ENCODE measurements at regions of chr5 and their contacts with region 1.

Region 1: DNA sequence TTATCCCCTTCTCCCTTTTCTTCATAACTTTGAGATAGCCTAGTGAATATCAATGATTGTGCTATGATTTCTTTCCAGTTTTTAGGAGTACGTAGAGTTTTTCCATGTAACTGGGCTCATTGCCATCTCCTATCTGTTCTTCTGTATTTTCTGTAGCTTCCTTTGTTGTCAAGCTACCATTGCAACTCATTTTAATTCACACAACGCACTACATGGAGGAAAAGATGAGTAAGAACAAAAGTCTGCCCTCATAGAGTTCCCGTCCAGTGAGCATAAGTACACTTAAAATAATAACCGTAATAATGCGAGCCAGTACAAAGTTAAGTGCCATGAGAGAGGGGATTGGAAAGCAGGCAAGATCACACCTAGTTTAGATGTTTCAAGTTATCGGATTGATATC is 177.7 kb downstream of the PAM start:
- DNase-seq: no peak
- ATAC-seq: no peak
- H3K4me3 ChIP-seq: no peak overlapping the region
- H3K27ac ChIP-seq: no peak overlapping the region
- H3K4me1 ChIP-seq: peaks cover 3 to 8% of the 10 kb centered on the region in 2 donors
- H3K27me3 ChIP-seq: no peaks in the 10 kb centered on the region

Region 2: GRCh38 chr5:102481054-102481715 is 451.6 kb before region 1 on chr5:
- intact Hi-C with region 1: no loop called
- DNase-seq: no peak
- ATAC-seq: no peak
- H3K4me3 ChIP-seq: no peak overlapping the region
- H3K27ac ChIP-seq: no peak overlapping the region
- H3K4me1 ChIP-seq: no peaks in the 10 kb centered on the region
- H3K27me3 ChIP-seq: no peaks in the 10 kb centered on the region

Region 3: DNA sequence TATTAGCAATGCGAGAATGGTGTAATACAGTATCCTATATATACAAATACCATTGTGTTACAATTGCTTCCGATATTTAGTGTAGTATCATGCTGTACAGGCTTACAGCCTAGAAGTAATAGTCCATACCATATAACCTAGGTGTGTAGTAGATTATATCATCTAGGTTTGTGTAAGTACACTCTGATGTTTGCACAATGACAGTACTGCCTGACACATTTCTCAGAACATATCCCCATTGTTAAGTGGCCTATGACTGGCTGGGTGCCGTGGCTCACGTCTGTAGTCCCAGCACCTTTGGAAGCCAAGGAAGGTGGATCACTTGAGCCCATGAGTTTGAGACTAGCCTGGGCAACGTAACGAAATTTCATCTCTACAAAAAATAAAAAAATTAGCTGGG is 53.0 kb before region 1 on chr5:
- intact Hi-C with region 1: loop called in 1 of 2 experiments (anchors 5 kb)
- DNase-seq: no peak
- ATAC-seq: no peak
- H3K4me3 ChIP-seq: no peak overlapping the region
- H3K27ac ChIP-seq: no peak overlapping the region
- H3K4me1 ChIP-seq: peaks cover 0 to 2% of the 10 kb centered on the region in 2 donors
- H3K27me3 ChIP-seq: no peaks in the 10 kb centered on the region

Measured in aorta (tissue), 5 donors.